ENCODE measurements at regions of chr22 and their contacts with region 1.

Region 1: GRCh38 chr22:19479357-19480172 is at the start of gene CDC45:
- DNase-seq: peak; percentile 96 to 97 (median 97)
- H3K4me3 ChIP-seq: peak within 1 kb of the TSS; percentile 69 to 94 (median 87)
- H3K4me3 Mint-ChIP-seq: peak within 1 kb of the TSS; percentile 81 to 89
- H3K27ac ChIP-seq: peak within 1 kb of the TSS; percentile 72 to 100
- H3K27ac Mint-ChIP-seq: peak within 1 kb of the TSS; percentile 97 to 99 (median 99)
- H3K4me1 ChIP-seq: peaks cover 22 to 28% of the 10 kb centered on the region in 2 donors
- H3K4me1 Mint-ChIP-seq: peaks cover 27% of the 10 kb centered on the region
- H3K27me3 ChIP-seq: no peaks in the 10 kb centered on the region
- H3K27me3 Mint-ChIP-seq: no peaks in the 10 kb centered on the region
- CTCF ChIP-seq: no peak
- polyA plus RNA-seq, gene CDC45: 0.04 TPM in 1 of 3 donors, not detected in the others

Region 2: DNA sequence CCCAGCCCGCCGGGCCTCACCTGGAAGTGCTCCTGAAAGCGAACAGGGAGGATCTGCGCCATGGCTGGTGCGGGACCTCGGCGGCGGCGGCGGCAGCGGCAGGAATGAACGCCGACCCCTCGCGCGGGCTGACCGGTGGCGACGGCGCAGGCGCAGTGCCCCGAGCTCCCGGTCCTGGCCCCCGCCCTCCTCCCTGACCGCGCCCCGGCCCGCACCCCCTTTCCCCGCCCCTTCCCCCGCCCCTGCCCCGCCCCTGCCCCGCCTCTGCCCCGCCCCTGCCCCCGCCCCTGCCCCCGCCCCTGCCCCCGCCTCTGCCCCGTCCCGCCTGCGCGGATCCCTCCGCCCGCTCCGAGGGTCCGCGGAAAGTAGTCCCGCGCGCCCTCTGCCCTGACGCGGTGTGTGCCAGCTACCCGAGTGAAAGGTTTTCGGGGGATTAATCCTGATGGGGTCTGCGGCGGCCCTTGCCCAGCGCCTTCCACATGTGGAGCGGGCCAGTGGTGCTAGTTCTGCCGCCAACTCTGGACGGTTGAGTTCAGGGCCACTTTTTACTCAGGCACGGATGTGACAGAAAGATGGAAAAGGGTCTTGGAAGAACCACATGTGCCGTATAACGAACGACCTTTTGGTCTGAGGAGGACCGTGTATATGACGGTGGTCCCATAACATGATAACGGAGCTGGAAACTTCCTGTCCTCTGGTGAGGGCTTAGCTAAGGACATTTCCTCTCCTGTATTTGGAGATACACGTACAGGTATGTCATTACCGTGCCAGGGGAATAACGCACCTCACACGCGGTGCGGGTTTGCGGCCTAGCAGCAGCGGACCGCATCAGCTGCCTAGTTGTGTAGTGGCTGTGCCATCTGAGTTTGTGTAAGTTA is 187.7 kb before region 1 on chr22 and contains the start of gene CLTCL1:
- intact Hi-C with region 1: loop called in 1 of 2 experiments (anchors 10 kb)
- DNase-seq: peak; percentile 49 to 71 (median 71)
- H3K4me3 ChIP-seq: peak within 1 kb of the TSS; percentile 82 to 96 (median 96)
- H3K4me3 Mint-ChIP-seq: peak within 1 kb of the TSS; percentile 86 to 96
- H3K27ac ChIP-seq: peak within 1 kb of the TSS in 1 of 2 donors; percentile 64
- H3K27ac Mint-ChIP-seq: peak within 1 kb of the TSS in 6 of 7 donors; percentile 7 to 86 (median 74)
- H3K4me1 ChIP-seq: peaks cover 18 to 22% of the 10 kb centered on the region in 2 donors
- H3K4me1 Mint-ChIP-seq: peaks cover 28% of the 10 kb centered on the region
- H3K27me3 ChIP-seq: peaks cover 18 to 22% of the 10 kb centered on the region in 2 donors
- H3K27me3 Mint-ChIP-seq: peaks cover 19 to 36% (median 21%) of the 10 kb centered on the region in 3 donors
- CTCF ChIP-seq: no peak
- polyA plus RNA-seq, gene CLTCL1: 5.1 to 17.0 (median 6.1) TPM

Region 3: DNA sequence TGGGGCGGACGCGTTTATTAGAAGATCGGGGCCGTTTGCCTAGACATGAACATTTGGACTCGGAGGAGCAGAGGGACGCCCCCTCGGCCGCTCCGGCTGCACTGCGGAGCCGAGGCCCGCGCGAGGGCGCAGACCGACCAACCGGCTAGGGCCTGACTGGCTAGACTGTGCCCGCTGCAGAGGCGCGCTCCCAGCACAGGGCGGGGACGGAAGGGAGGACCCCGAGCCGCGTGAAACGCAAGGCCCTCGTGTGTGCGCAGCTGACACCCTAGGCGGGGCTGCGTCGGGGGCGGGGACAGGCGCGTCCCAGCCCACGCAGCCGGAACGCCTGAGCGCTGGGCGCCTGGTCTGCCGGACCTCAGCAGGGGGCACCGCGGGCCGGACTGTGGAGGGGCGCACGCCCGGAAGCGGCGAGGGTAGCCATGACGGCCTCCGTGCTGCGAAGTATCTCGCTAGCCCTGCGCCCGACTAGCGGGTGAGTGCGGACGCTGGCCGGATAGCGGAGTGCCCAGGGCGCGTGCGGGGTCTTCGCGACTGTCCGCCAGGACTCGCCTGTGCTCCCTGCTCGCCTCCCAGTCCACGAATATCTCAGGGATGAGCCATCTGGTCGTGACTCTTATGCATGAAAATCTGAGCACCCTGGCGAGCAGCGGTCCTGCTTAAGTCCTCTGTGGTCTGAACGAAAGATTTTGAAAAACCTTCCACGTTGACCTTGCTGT is 47.3 kb before region 1 on chr22 and contains the start of gene MRPL40:
- intact Hi-C with region 1: loop called (anchors 1 to 2 kb)
- DNase-seq: peak; percentile 81 to 93 (median 88)
- H3K4me3 ChIP-seq: peak within 1 kb of the TSS; percentile 82 to 97 (median 87)
- H3K4me3 Mint-ChIP-seq: peak within 1 kb of the TSS; percentile 86 to 93
- H3K27ac ChIP-seq: peak within 1 kb of the TSS; percentile 90 to 95
- H3K27ac Mint-ChIP-seq: peak within 1 kb of the TSS; percentile 89 to 94 (median 91)
- H3K4me1 ChIP-seq: peaks cover 42% of the 10 kb centered on the region in 2 donors
- H3K4me1 Mint-ChIP-seq: peaks cover 38% of the 10 kb centered on the region
- H3K27me3 ChIP-seq: no peaks in the 10 kb centered on the region
- H3K27me3 Mint-ChIP-seq: peaks cover 0 to 2% (median 0%) of the 10 kb centered on the region in 3 donors
- CTCF ChIP-seq: no peak
- polyA plus RNA-seq, gene MRPL40: 9.2 to 61.4 (median 48.4) TPM

Region 4: GRCh38 chr22:19447388-19448075 is 32.0 kb before region 1 on chr22 and contains the start of gene C22orf39:
- intact Hi-C with region 1: no loop called
- DNase-seq: peak; percentile 80 to 86 (median 84)
- H3K4me3 ChIP-seq: peak within 1 kb of the TSS; percentile 54 to 82 (median 69)
- H3K4me3 Mint-ChIP-seq: peak within 1 kb of the TSS; percentile 91 to 96
- H3K27ac ChIP-seq: peak within 1 kb of the TSS; percentile 58 to 87
- H3K27ac Mint-ChIP-seq: peak within 1 kb of the TSS; percentile 80 to 96 (median 94)
- H3K4me1 ChIP-seq: peaks cover 16 to 26% of the 10 kb centered on the region in 2 donors
- H3K4me1 Mint-ChIP-seq: peaks cover 25% of the 10 kb centered on the region
- H3K27me3 ChIP-seq: no peaks in the 10 kb centered on the region
- H3K27me3 Mint-ChIP-seq: no peaks in the 10 kb centered on the region
- CTCF ChIP-seq: no peak
- polyA plus RNA-seq, gene C22orf39: 21.2 to 40.3 (median 38.4) TPM

Region 5: GRCh38 chr22:19523240-19524169 is 43.9 kb after region 1 on chr22:
- intact Hi-C with region 1: no loop called
- DNase-seq: no peak
- H3K4me3 ChIP-seq: peak overlapping the region in 1 of 3 experiments; percentile 38
- H3K4me3 Mint-ChIP-seq: peak overlapping the region; percentile 31 to 87
- H3K27ac ChIP-seq: no peak overlapping the region
- H3K27ac Mint-ChIP-seq: no peak overlapping the region
- H3K4me1 ChIP-seq: peaks cover 0 to 17% of the 10 kb centered on the region in 2 donors
- H3K4me1 Mint-ChIP-seq: peaks cover 13% of the 10 kb centered on the region
- H3K27me3 ChIP-seq: peaks cover 0 to 38% of the 10 kb centered on the region in 2 donors
- H3K27me3 Mint-ChIP-seq: peaks cover 35 to 55% (median 38%) of the 10 kb centered on the region in 3 donors
- CTCF ChIP-seq: no peak

Region 6: DNA sequence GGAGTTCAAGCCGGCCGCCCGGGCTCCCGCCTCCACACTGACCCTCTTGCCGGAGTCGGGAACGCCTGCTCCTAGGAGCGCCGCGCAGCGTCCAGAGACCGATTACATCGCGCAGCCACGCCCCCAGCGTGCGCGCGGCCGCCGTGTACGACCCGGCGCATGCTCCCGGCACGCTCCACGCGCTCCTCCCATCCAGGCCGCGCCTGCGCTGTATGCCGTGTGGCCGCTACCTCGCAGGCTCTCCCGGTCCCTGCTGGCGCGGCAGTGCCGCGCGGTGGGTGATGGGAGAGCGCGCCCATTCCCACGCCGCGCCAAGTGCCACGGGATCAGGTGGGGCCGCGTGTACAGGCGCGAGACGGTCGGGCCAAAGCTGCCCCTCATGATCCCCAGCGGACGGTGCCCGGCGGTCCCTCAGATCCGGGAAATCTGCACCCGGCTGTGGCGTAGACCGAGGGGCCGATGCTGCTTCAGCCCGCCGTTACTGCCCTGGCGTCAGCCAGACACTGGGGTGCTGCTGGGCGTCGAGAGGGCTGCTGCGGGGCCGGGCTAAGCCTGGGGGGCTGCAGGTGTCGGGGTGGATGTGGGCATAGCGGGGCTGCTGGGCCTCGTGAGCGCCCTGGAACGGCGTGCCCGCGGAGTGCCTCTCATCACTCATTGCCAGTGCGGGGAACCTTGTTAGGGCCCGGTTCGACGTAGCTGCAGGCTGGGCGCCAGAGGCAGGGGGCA is 375.4 kb after region 1 on chr22 and contains the starts of genes GNB1L and RTL10:
- intact Hi-C with region 1: loop called in 1 of 2 experiments (anchors 10 kb)
- DNase-seq: peak; percentile 94 to 97 (median 96)
- H3K4me3 ChIP-seq: peak within 1 kb of the TSS; percentile 55 to 97 (median 93)
- H3K4me3 Mint-ChIP-seq: peak within 1 kb of the TSS; percentile 86 to 93
- H3K27ac ChIP-seq: peak within 1 kb of the TSS; percentile 88 to 91
- H3K27ac Mint-ChIP-seq: peak within 1 kb of the TSS; percentile 84 to 94 (median 92)
- H3K4me1 ChIP-seq: peaks cover 29 to 31% of the 10 kb centered on the region in 2 donors
- H3K4me1 Mint-ChIP-seq: peaks cover 30% of the 10 kb centered on the region
- H3K27me3 ChIP-seq: no peaks in the 10 kb centered on the region
- H3K27me3 Mint-ChIP-seq: peaks cover 0 to 4% (median 1%) of the 10 kb centered on the region in 3 donors
- CTCF ChIP-seq: no peak
- polyA plus RNA-seq, gene GNB1L: 3.4 to 6.0 (median 4.8) TPM
- polyA plus RNA-seq, gene RTL10: 1.4 to 6.5 (median 1.5) TPM

Measured in CD14-positive monocyte (primary cell).